Activated naive CD8-positive, alpha-beta T cell treated with anti-CD3 and anti-CD28 coated beads, Interleukin-2, amount 10 ng/mL, durations not matched to agents 7 days and 5 days (primary cell): ENCODE measurements at regions of chr17 and their contacts with region 1.

Region 1: DNA sequence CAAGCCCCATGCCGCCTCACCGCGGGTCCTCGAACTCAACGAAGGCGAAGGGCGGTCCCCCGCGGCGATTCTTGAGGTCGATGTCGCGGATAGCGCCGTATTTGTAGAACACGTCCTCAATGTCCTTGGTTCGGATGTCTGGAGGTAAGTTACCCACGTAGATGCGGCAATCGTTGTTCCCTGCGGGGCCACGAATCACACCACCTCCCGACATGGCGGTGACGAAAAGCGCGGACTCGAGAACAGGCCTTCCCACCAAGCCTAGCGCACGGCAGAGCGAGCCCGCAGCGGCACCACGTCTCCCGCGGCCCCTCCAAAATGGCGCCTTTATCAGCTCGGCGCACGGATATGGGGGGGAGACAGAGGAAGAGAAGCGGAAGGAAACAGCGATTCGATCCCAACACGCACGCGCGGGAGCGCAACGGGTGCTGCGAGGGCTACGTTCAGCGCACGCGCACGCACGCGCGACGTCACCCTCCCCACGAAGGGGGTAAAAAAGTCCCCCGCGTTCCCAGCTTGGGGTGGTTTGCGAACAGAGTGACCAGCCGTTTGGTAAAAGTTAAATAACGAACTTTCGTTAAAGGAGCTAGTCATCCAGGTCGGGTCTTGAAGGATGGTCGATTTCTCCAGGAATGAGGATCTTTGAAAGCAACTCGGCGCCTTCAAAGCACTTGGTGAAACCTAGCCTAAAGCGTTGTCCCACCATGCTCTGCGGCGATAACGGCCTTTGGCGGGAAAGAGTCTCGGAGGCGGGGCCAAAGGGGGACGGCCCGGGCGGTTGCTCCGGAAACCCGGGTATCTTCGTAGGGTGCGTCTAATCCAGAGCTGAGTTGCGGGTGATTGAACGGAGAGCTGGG is at the start of gene SRSF1:
- DNase-seq: peak; percentile 96
- ATAC-seq: peak; percentile 86
- H3K4me3 Mint-ChIP-seq: peak within 1 kb of the TSS; percentile 98
- H3K27ac Mint-ChIP-seq: peak within 1 kb of the TSS; percentile 99
- H3K4me1 Mint-ChIP-seq: peaks cover 43% of the 10 kb centered on the region
- H3K27me3 Mint-ChIP-seq: no peaks in the 10 kb centered on the region
- total RNA-seq, gene SRSF1: 314 to 323 TPM

Region 2: GRCh38 chr17:57927048-57927723 is 80.0 kb before region 1 on chr17:
- POLR2A ChIA-PET with region 1: no interaction called
- DNase-seq: no peak
- ATAC-seq: no peak
- H3K4me3 Mint-ChIP-seq: no peak overlapping the region
- H3K27ac Mint-ChIP-seq: no peak overlapping the region
- H3K4me1 Mint-ChIP-seq: peaks cover 11% of the 10 kb centered on the region
- H3K27me3 Mint-ChIP-seq: peaks cover 34% of the 10 kb centered on the region

Region 3: DNA sequence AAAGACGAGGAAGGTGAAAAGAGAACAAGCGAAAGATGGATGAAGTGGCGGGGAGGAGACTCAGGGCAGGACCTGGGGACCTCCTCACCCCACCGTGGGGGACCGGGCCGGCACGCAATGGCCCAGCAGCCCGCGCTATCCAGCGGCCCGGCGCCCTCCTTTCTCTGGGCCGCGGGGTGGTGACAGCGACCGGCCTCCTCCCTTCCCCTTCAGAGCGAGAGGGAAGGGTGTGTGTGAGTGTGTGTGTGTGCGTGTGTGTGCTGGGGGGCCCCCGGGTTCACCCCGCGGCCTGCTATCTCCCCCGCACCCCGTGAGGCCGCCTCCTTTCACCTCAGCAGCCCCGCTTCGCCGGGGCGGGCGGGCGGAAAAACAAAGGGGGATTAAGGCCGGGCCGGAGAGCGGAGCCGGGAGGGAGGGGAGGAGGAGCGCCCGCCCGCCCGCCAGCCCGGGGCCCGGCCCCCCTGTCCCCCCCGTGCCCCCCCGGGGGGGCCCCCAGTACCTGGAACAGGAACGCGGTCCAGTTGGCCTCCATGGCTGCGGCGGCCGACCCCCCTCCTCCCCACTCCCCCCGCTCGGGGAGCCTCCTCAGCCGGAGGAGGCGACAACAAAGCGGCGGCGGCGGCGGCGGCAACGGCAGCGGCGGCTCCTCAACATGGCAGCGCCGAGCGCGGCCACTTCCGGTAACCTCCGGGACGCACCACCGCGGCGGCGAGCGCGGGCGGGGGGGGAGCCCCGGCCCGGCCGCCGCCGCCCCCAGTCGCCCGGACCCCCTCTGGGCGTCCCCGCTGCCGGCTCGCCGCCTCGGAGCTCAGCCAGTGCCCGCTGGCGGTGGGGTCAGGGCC is 19.4 kb before region 1 on chr17 and contains the start of gene VEZF1:
- POLR2A ChIA-PET with region 1: interaction called, 24 read pairs
- DNase-seq: peak; percentile 90
- ATAC-seq: peak; percentile 73
- H3K4me3 Mint-ChIP-seq: peak within 1 kb of the TSS; percentile 92
- H3K27ac Mint-ChIP-seq: peak within 1 kb of the TSS; percentile 90
- H3K4me1 Mint-ChIP-seq: peaks cover 43% of the 10 kb centered on the region
- H3K27me3 Mint-ChIP-seq: no peaks in the 10 kb centered on the region
- total RNA-seq, gene VEZF1: 54.0 to 57.8 TPM

Region 4: DNA sequence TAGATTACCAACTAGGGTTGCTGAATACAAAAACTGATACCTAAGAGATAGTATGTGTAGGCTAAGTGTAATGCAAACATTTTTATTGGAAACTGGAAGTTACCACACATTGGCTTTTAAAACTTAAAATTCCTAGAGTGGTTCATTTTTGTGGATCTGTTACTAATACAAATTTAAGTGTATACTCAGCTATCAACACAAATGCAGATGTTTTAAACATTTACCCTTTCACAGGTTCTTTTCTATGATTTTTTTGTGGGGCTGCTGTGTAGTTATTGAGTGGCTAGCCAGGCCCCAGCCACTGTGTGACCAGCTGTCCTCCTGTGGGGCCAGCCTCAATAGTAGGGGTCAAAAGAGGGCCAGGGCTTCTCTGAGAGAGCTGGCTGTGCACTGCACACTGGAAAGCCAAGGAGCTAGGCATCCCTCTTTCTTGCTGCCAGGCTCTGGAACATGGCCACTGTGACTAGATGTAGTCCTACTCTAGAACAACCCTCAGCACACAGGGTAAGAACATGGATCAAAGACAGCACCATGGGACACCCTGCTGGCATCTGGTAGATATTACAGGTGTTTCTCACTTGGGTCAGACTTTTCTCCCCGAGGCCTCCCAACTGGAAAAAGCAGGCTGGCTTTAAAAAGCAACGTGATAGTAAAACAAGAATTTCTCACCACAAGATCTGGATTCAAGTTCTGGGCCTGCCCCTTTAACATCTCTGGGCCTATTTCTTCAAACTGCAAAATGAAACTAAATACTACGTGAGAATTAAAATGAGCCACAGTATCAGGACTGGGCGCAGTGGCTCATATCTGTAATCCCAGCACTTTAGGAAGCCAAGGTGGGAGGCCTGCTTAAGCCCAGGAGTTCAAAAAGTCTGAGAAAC is 11.8 kb before region 1 on chr17:
- POLR2A ChIA-PET with region 1: interaction called, 49 read pairs
- DNase-seq: no peak
- ATAC-seq: peak; percentile 81
- H3K4me3 Mint-ChIP-seq: no peak overlapping the region
- H3K27ac Mint-ChIP-seq: peak overlapping the region; percentile 5
- H3K4me1 Mint-ChIP-seq: peaks cover 34% of the 10 kb centered on the region
- H3K27me3 Mint-ChIP-seq: no peaks in the 10 kb centered on the region

Region 5: GRCh38 chr17:58043221-58044181 is 36.3 kb after region 1 on chr17:
- POLR2A ChIA-PET with region 1: no interaction called
- DNase-seq: no peak
- ATAC-seq: no peak
- H3K4me3 Mint-ChIP-seq: no peak overlapping the region
- H3K27ac Mint-ChIP-seq: no peak overlapping the region
- H3K4me1 Mint-ChIP-seq: no peaks in the 10 kb centered on the region
- H3K27me3 Mint-ChIP-seq: peaks cover 22% of the 10 kb centered on the region

Region 6: GRCh38 chr17:58056251-58056875 is 49.2 kb after region 1 on chr17:
- POLR2A ChIA-PET with region 1: no interaction called
- DNase-seq: no peak
- ATAC-seq: no peak
- H3K4me3 Mint-ChIP-seq: no peak overlapping the region
- H3K27ac Mint-ChIP-seq: no peak overlapping the region
- H3K4me1 Mint-ChIP-seq: peaks cover 2% of the 10 kb centered on the region
- H3K27me3 Mint-ChIP-seq: peaks cover 9% of the 10 kb centered on the region

Region 7: GRCh38 chr17:58082870-58083490 is 75.8 kb after region 1 on chr17 and contains the start of gene DYNLL2:
- POLR2A ChIA-PET with region 1: interaction called, 20 read pairs
- DNase-seq: peak; percentile 86
- ATAC-seq: peak; percentile 79
- H3K4me3 Mint-ChIP-seq: peak within 1 kb of the TSS; percentile 86
- H3K27ac Mint-ChIP-seq: peak within 1 kb of the TSS; percentile 83
- H3K4me1 Mint-ChIP-seq: peaks cover 32% of the 10 kb centered on the region
- H3K27me3 Mint-ChIP-seq: peaks cover 26% of the 10 kb centered on the region
- total RNA-seq, gene DYNLL2: 29.5 to 31.3 TPM